Caco-2 (cell line): ENCODE measurements at regions of chr17 and their contacts with region 1.

Region 1: DNA sequence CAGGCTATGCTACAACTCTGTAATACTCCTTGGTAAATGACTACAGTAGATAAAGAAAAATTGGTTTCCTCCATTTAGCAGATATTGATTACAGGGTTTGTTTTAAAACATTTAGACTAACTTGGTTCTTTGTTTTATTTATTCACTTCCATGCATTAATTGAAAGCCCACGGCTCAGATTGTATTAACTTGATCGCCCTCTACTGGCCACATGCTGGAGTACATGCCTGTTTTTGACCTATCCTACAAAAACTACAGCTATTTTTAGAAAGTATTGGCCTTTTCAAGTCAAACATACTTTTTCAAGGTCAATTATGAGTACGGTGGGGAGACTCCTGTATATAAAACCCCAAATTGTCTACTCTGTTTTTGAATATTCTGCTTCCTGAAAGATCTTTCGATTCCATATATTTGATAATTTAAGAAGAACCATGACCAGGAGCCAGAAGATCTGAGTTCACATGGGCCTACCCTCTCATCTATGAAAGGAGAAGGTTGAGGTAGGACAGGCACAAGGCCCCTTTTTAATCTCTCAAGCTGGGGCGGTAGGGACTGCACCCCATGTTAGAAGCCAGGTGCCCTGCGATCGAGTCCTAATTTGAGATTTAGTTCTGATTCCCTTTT is 51.8 kb downstream of the CA10 start:
- DNase-seq: peak in 1 of 2 experiments; percentile 54
- H3K4me3 ChIP-seq: no peak overlapping the region
- H3K4me3 Mint-ChIP-seq: no peak overlapping the region
- H3K27ac Mint-ChIP-seq: no peak overlapping the region
- H3K4me1 ChIP-seq: no peaks in the 10 kb centered on the region
- H3K4me1 Mint-ChIP-seq: no peaks in the 10 kb centered on the region
- H3K27me3 ChIP-seq: no peaks in the 10 kb centered on the region
- H3K27me3 Mint-ChIP-seq: peaks cover 3% of the 10 kb centered on the region
- CTCF ChIP-seq: peak; percentile 70 to 89

Region 2: DNA sequence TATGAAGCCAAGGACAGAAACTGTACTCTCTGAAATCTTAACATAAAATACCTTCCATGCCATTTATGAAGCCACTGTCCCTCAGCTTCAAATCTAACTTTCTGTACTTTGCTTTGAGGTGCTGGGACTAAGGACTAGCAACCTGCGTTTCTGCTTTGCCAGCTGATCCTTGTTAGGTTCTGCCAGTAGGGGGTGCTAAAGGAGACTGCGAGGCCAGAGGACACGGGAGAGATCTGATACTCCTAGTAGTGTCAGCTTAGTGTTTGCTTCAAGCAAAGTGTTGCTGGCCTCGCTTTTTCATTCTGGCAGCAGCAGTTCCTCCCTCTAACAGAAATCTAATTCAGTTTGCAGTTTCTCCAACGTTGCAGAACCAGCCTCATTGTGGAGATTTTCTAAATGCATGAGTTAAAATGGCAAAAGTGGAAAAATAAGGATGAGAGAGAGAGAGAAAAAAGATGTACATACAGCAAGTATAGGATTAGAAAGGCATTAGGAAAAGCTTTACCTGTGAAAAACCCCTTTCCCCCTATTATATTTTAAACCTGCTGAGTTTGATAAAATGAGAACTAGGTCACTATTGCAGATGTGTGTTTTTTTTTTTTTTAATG is 245.7 kb before region 1 on chr17:
- CTCF ChIA-PET with region 1: interaction called, 5 read pairs
- POLR2A ChIA-PET with region 1: no interaction called
- intact Hi-C with region 1: loop called (anchors 1 kb)
- DNase-seq: peak; percentile 42 to 65
- H3K4me3 ChIP-seq: no peak overlapping the region
- H3K4me3 Mint-ChIP-seq: no peak overlapping the region
- H3K27ac Mint-ChIP-seq: no peak overlapping the region
- H3K4me1 ChIP-seq: no peaks in the 10 kb centered on the region
- H3K4me1 Mint-ChIP-seq: no peaks in the 10 kb centered on the region
- H3K27me3 ChIP-seq: no peaks in the 10 kb centered on the region
- H3K27me3 Mint-ChIP-seq: peaks cover 7% of the 10 kb centered on the region
- CTCF ChIP-seq: peak; percentile 61 to 70

Region 3: GRCh38 chr17:51948128-51948527 is 158.6 kb before region 1 on chr17:
- CTCF ChIA-PET with region 1: no interaction called
- POLR2A ChIA-PET with region 1: no interaction called
- intact Hi-C with region 1: loop called (anchors 10 kb)
- DNase-seq: no peak
- H3K4me3 ChIP-seq: no peak overlapping the region
- H3K4me3 Mint-ChIP-seq: no peak overlapping the region
- H3K27ac Mint-ChIP-seq: no peak overlapping the region
- H3K4me1 ChIP-seq: peaks cover 6% of the 10 kb centered on the region; the same call in 1 of the 2 replicates
- H3K4me1 Mint-ChIP-seq: no peaks in the 10 kb centered on the region
- H3K27me3 ChIP-seq: no peaks in the 10 kb centered on the region; the same call in 1 of the 2 replicates
- H3K27me3 Mint-ChIP-seq: peaks cover 12% of the 10 kb centered on the region
- CTCF ChIP-seq: no peak